MCF 10A (cell line): ENCODE measurements at regions of chr1 and their contacts with region 1.

Region 1: DNA sequence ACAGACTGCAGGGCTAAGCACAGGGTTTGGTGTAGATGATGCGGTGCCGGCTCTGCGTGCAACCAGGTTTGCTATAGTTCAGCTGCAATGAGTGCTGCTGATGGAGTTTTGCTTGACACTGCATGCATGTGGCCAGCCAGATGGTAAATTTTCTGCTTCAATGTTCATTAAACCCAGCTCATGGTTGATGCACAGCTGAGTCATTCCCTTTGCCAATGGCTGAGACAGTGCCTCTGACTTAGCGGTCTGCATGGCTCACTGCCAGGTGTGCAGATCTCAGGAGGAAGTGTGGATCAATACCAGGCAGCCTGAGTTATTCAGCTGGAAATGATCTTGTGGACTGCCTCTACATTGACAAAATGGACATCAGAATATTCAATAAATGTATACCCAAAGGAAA is 172.7 kb upstream of the ZP4 start:
- DNase-seq: peak; percentile 91
- H3K4me3 Mint-ChIP-seq: no peak overlapping the region
- H3K27ac Mint-ChIP-seq: peak overlapping the region; percentile 98
- H3K4me1 Mint-ChIP-seq: peaks cover 31% of the 10 kb centered on the region
- H3K27me3 Mint-ChIP-seq: no peaks in the 10 kb centered on the region
- CTCF ChIP-seq: no peak

Region 2: DNA sequence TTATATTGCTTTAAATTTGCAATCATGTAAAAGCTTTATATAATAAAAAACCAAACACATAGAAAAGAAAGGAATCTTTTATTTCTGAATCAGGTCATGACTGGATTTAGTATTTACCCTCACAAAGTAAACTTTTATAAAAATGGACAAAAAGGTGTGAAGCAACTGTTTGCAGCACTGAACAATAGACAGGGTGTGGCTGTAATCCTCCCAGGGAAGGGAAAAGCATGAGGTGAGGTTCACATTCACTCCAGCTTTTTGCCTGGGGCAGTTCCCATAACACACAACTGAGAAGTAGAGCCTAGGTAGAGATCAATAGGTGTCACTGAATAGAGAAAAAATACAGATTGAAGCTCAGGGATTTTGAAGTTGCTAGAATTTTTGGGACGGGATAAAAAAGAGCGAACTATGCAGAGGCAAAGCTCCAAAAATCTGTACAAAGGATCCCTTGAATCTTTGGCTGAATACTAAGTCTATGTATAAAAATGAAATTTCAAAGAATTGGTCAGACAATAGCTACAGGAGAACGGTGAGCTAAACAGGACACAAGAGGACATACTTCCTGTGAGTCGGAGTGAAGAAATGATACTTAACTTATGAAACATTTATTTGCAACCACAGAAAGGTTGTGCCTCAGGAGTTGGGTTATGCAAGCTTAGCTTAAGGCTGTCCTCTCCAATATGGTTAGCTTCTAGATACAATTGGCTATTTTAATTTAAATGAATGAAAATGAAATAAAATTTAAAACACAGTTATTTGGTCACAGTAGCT is 10.8 kb before region 1 on chr1:
- CTCF ChIA-PET with region 1: interaction called, 11 read pairs
- POLR2A ChIA-PET with region 1: interaction called, 51 read pairs
- intact Hi-C with region 1: no loop called
- DNase-seq: peak; percentile 92
- H3K4me3 Mint-ChIP-seq: no peak overlapping the region
- H3K27ac Mint-ChIP-seq: peak overlapping the region; percentile 67
- H3K4me1 Mint-ChIP-seq: no peaks in the 10 kb centered on the region
- H3K27me3 Mint-ChIP-seq: no peaks in the 10 kb centered on the region
- CTCF ChIP-seq: no peak

Region 3: DNA sequence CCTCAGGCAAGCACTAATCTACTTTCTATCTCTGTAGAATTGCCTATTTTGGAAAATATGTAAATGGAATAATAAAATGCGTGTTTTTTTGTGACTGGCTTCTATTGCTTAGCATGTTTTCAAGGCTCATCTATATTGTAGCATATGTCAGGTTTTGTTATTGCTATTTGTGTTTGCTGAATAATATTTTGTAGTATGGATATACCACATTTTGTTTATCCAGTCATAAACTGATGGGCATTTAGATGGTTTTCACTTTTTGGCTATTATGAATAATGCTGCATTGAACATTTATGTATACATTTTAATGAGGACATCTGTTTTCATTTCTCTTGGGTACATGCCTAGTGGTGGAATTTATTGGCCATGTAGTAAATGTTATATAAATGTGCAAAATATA is 10.5 kb after region 1 on chr1:
- CTCF ChIA-PET with region 1: interaction called, 4 read pairs
- POLR2A ChIA-PET with region 1: interaction called, 12 read pairs
- intact Hi-C with region 1: no loop called
- DNase-seq: no peak
- H3K4me3 Mint-ChIP-seq: no peak overlapping the region
- H3K27ac Mint-ChIP-seq: no peak overlapping the region
- H3K4me1 Mint-ChIP-seq: peaks cover 5% of the 10 kb centered on the region
- H3K27me3 Mint-ChIP-seq: no peaks in the 10 kb centered on the region
- CTCF ChIP-seq: no peak